MCF 10A (cell line): ENCODE measurements at regions of chr5 and their contacts with region 1.

Region 1: DNA sequence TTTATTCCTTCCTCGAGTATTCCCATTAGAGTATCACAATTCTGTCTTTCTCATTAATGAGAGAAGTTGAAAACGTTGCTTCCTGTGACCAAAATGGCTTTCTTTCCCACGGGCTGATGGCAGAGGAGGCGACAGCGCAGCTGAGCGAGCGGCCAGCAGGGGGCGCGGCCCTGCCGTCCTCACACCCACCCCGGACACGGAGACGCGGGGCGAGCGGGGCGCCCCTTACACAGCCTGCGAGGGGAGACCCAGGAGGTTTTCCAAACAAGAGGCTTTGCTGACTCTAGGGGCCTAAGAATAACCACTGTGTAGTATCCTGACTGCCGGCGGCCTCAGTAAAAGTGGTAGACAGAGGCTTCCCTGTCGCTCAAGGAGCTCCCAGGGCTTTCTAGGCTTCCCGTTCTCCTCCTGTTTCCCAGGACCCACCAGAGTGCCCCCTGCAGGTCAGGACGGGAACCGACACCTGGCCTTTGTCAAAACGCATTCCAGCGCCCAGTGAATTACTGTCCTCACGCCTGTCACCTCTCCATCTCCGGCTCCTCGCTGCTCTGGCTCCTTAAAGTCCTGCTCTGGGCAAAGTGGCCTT is 27.3 kb upstream of the FGF1 start:
- DNase-seq: peak; percentile 95
- H3K4me3 Mint-ChIP-seq: peak overlapping the region; percentile 77
- H3K27ac Mint-ChIP-seq: peak overlapping the region; percentile 10
- H3K4me1 Mint-ChIP-seq: peaks cover 19% of the 10 kb centered on the region
- H3K27me3 Mint-ChIP-seq: no peaks in the 10 kb centered on the region
- CTCF ChIP-seq: peak; percentile 99

Region 2: DNA sequence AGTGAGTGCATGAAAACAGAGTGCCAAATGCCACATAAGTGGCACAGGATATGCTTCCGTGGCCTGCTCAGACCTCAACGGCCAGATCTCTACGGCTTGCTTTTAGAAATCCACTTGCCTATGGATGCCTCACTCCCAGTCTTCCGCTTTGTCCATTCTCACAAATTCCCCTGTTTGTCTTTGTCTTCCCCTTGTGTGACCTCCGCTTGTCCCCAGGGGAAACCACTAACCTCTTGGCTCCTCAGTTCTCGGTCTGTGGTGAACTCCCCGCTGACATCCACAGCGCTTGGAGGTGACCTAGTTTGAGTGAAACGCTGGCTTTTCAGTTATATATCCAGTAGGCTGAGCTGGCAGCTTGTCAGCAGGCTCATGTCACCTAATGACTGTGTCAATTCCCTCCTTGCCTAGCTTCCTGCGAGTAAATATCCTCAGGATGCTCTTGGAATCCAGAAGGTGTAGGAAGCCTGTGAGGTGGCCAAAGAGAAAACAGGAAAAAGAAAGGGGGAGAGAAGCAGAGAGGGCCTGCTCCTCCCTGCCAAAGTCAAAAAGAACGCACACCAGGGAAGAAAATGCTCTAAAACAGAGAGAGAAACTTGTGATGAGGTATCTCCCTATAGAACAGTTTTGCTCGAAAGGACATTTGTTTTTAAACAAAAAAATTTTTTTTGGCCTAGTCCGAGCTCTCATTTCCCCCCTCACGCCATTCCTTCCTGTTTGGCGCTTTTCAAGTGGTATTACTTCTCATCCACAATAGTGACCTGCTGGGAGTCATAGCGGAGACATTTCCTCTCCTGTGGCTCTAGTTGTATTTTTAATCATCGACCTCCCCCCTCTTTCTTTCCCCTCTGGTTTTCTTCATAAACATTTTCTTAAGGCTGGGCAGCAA is 286.8 kb before region 1 on chr5:
- CTCF ChIA-PET with region 1: no interaction called
- POLR2A ChIA-PET with region 1: no interaction called
- intact Hi-C with region 1: no loop called
- DNase-seq: no peak
- H3K4me3 Mint-ChIP-seq: no peak overlapping the region
- H3K27ac Mint-ChIP-seq: no peak overlapping the region
- H3K4me1 Mint-ChIP-seq: peaks cover 1% of the 10 kb centered on the region
- H3K27me3 Mint-ChIP-seq: no peaks in the 10 kb centered on the region
- CTCF ChIP-seq: no peak

Region 3: GRCh38 chr5:142466195-142466971 is 246.8 kb before region 1 on chr5:
- CTCF ChIA-PET with region 1: no interaction called
- POLR2A ChIA-PET with region 1: no interaction called
- intact Hi-C with region 1: no loop called
- DNase-seq: peak; percentile 31
- H3K4me3 Mint-ChIP-seq: no peak overlapping the region
- H3K27ac Mint-ChIP-seq: peak overlapping the region; percentile 28
- H3K4me1 Mint-ChIP-seq: peaks cover 9% of the 10 kb centered on the region
- H3K27me3 Mint-ChIP-seq: no peaks in the 10 kb centered on the region
- CTCF ChIP-seq: no peak

Region 4: GRCh38 chr5:142605611-142606010 is 107.6 kb before region 1 on chr5:
- CTCF ChIA-PET with region 1: interaction called, 31 read pairs
- POLR2A ChIA-PET with region 1: no interaction called
- intact Hi-C with region 1: no loop called
- DNase-seq: no peak
- H3K4me3 Mint-ChIP-seq: no peak overlapping the region
- H3K27ac Mint-ChIP-seq: no peak overlapping the region
- H3K4me1 Mint-ChIP-seq: peaks cover 10% of the 10 kb centered on the region
- H3K27me3 Mint-ChIP-seq: no peaks in the 10 kb centered on the region
- CTCF ChIP-seq: no peak

Region 5: DNA sequence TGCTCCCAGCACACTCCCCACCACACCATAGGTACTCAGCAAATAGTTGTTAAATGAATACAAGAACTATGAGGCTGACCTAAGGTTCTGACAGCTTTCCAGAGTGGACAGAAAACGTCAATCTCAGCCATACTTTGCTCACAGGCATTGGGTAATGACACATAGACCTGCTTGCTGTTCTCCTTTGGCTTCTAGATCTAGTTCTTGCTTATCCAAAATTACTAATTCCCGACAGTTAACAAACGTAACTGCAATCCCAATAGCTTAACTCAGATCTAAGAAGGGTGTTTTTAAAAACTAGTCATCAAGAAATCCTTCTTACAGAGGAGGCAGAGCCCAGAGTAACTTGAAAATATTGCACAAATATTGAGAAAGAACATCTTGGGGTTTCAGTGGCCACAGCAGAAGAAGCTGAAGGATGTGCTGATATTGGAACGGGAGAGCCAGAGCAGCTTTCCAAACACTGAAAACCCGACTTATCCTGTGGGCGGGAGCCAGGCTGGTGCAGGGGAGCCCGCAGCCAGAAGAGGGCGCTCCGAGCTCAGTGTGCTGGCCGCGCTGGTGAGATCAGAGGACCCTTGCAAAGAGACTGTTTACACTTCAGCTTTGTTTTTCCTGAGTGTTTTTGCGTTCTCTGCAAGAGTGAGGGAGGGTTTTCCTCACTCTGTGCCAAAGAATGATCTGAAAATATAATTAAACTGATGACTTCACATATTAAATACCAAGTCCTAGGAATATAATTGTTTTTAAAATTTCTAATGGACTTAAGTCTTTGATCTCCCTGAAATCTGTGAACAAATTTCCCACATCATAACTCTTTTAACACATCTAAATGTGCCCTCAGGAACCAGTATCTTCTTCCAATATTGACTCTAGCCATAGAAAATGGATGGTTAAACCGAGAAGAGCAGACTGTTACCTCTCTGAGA is 57.6 kb before region 1 on chr5:
- CTCF ChIA-PET with region 1: interaction called, 1,243 read pairs
- POLR2A ChIA-PET with region 1: interaction called, 3 read pairs
- intact Hi-C with region 1: loop called (anchors 1 kb)
- DNase-seq: peak; percentile 84
- H3K4me3 Mint-ChIP-seq: no peak overlapping the region
- H3K27ac Mint-ChIP-seq: no peak overlapping the region
- H3K4me1 Mint-ChIP-seq: no peaks in the 10 kb centered on the region
- H3K27me3 Mint-ChIP-seq: no peaks in the 10 kb centered on the region
- CTCF ChIP-seq: peak; percentile 99

Region 6: DNA sequence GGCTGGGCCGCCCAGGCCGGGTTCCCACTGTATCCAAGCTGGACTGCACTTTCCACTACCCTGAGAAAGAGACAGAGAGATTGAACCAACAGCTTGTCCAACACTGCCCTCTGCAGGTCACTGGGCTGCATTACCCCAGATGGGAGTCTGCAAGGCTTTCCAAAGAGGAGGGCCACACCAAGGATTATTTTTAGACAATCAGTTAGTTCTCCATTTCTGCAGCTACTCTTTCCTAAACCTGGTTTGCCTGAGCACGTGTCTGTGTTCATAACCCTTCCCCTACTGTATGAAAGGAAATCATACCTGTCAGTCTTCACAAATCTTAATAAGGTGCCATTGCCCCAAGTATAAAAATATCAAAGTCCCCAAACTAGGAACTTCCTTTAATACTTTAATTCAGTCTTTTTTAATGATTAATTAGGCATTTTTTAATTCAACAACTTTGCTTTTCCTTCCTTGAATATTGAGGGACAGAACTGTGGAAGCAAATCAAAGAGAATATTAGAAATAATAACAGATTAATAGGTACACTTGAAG is 14.0 kb before region 1 on chr5:
- CTCF ChIA-PET with region 1: interaction called, 99 read pairs
- POLR2A ChIA-PET with region 1: interaction called, 3 read pairs
- intact Hi-C with region 1: no loop called
- DNase-seq: peak; percentile 93
- H3K4me3 Mint-ChIP-seq: no peak overlapping the region
- H3K27ac Mint-ChIP-seq: no peak overlapping the region
- H3K4me1 Mint-ChIP-seq: peaks cover 14% of the 10 kb centered on the region
- H3K27me3 Mint-ChIP-seq: no peaks in the 10 kb centered on the region
- CTCF ChIP-seq: peak; percentile 100

Region 7: DNA sequence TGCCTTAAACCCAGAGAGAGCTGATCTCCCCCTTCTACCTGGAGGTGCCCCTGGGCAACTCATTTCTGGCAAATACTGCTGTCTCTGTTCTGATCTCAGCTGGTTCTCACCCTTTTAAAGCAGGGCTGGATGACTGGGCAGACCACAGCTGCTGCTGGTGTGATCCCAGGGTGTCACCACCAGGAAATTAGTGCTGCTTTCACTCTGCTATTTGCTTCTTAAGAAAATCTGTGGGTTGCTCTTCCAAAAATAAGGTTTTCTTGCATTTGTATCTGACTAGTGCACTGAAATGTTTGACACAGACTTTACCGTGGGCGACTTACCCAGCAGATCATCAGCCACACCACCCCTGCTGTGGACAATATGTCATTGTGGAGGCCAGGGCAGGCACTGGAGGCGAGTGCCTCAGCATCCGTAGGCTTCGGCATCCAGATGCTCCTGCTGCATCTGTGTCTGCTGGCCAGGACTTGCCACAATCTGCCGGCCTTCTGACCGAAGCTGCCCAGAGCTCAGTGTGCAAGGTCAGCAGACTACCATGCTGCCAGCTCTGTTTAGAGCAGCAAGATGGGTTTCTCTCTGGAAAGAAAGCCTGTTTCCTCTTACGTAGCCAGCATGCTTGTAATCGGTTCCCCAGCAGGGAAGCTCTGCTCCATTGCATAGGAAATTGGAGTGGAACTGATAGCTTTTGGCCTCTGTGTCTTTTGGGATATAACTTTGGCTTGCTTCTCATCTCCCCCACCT is 70.6 kb after region 1 on chr5:
- CTCF ChIA-PET with region 1: interaction called, 21 read pairs
- POLR2A ChIA-PET with region 1: no interaction called
- intact Hi-C with region 1: no loop called
- DNase-seq: no peak
- H3K4me3 Mint-ChIP-seq: no peak overlapping the region
- H3K27ac Mint-ChIP-seq: no peak overlapping the region
- H3K4me1 Mint-ChIP-seq: peaks cover 20% of the 10 kb centered on the region
- H3K27me3 Mint-ChIP-seq: no peaks in the 10 kb centered on the region
- CTCF ChIP-seq: no peak

Region 8: GRCh38 chr5:142881076-142881783 is 168.0 kb after region 1 on chr5:
- CTCF ChIA-PET with region 1: interaction called, 1,942 read pairs
- POLR2A ChIA-PET with region 1: interaction called, 31 read pairs
- intact Hi-C with region 1: loop called (anchors 1 kb)
- DNase-seq: no peak
- H3K4me3 Mint-ChIP-seq: no peak overlapping the region
- H3K27ac Mint-ChIP-seq: no peak overlapping the region
- H3K4me1 Mint-ChIP-seq: peaks cover 19% of the 10 kb centered on the region
- H3K27me3 Mint-ChIP-seq: no peaks in the 10 kb centered on the region
- CTCF ChIP-seq: no peak

Region 9: DNA sequence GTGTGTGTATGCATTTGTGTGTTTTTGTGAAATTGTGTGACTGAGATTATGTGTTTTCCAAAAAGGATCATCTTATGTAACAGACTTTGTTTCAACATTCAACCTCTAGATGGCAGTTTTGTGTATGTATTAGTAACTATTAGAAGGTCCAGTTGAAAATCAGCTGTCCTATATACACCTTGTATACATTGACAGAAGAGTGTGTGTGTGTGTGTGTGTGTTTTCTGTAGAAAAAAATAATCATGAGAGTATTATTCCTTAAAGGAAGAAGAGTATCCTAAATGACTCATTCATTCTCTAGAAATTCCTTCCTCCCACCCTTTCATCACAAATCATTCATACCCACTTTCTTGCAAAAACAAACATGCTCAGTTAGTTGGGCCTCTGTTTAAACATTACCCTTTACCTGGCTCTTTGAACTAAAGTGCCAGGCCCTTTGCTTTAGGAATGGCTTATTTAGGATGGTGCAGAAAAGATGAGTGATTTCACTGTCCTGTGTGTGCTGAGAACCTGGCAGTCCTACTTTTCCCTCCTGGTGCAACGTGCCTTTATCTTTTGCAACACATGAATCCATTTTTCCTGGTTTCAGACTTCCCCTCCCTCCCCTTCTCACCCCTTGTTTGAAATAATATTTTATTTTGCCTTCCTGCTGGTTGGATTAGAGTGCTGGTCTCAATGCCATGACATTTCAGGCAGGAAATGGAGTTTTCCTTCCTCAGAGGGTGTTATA is 209.2 kb after region 1 on chr5:
- CTCF ChIA-PET with region 1: interaction called, 180 read pairs
- POLR2A ChIA-PET with region 1: no interaction called
- intact Hi-C with region 1: no loop called
- DNase-seq: peak; percentile 56
- H3K4me3 Mint-ChIP-seq: no peak overlapping the region
- H3K27ac Mint-ChIP-seq: no peak overlapping the region
- H3K4me1 Mint-ChIP-seq: peaks cover 25% of the 10 kb centered on the region
- H3K27me3 Mint-ChIP-seq: no peaks in the 10 kb centered on the region
- CTCF ChIP-seq: peak; percentile 68